Cardiac septum (tissue), 1 donor: ENCODE measurements at regions of chr19 and their contacts with region 1.

Region 1: GRCh38 chr19:7903244-7904073 is at the start of gene MAP2K7:
- DNase-seq: peak; percentile 100
- total RNA-seq, gene MAP2K7: 28.6 TPM

Region 2: DNA sequence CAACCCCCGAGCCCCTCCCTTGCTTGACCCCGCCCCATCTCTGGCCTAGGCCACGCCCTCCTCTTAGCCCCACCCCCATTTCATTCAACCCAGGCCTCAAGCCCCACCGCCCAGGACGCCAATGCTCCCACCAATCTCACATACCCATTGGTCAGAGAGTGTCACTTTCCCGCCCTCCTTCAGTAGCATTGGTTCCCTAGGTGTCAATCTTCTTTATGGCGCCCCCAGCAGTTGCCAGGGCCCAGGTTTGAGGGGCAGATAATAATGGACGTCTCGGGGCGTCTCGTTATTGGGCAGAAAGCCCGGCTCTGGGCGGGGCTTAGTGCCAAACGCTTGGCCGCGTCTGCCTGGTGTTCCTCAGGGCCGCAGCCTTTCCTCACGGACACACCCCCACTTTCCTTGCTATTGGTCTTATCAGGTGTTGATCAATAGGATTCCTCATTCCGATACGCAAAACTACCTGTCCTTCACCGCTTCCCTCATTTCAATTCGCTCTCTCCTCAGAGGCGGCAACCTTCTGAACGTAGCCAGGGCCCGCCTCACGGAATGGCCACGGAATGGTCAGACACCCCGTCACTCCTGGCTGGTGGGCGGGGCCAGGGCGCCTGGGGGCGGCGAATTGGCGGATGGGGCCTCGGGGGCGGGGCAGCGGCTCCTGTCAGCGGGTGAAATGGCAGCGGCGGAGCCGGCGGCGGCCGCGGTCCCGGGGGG is 73.7 kb before region 1 on chr19 and contains the start of gene EVI5L:
- intact Hi-C with region 1: loop called (anchors 5 kb)
- DNase-seq: peak; percentile 99
- total RNA-seq, gene EVI5L: 23.6 TPM

Region 3: GRCh38 chr19:7919610-7920518 is 16.4 kb after region 1 on chr19 and contains the start of gene SNAPC2:
- intact Hi-C with region 1: loop called (anchors 2 kb)
- DNase-seq: peak; percentile 96
- total RNA-seq, gene SNAPC2: 12.3 TPM